ENCODE measurements at regions of chr12 and their contacts with region 1.

Region 1: DNA sequence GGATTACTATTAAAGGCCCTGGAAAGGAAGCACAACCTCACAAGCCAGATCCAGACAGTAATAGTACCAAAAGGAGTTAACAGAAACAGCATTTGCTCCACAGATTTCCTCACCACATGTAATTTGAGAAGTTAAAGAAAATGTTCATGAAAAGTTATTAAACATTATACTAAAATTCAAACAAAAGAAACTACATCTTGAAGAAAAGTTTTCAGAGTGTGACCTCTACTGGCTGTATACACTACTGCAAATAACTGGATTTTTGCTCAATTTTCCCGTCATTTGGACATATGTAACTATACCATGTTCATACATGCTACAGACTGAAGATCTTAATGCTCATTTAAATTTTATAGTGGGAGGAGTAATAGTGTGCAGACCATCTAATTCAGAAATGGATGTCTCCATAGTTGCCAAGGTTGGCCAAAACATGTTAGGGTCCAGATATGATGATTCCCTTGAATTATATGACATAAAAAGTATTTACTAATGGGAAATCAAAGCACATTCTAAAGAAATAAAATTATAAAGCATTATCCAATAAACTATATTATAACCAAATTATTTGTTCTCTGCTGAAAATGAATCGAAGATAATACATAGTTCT is 5.6 kb downstream of the KRR1 start:
- DNase-seq: no peak
- ATAC-seq: no peak

Region 2: GRCh38 chr12:75334384-75335030 is 171.3 kb before region 1 on chr12 and contains the start of gene GLIPR1L1:
- intact Hi-C with region 1: loop called in 1 of 2 experiments (anchors 5 kb)
- DNase-seq: peak; percentile 88
- ATAC-seq: peak; percentile 88 to 91
- total RNA-seq, gene GLIPR1L1: not detected

Region 3: GRCh38 chr12:75345531-75345930 is 160.3 kb before region 1 on chr12:
- intact Hi-C with region 1: no loop called
- DNase-seq: no peak
- ATAC-seq: no peak

Region 4: DNA sequence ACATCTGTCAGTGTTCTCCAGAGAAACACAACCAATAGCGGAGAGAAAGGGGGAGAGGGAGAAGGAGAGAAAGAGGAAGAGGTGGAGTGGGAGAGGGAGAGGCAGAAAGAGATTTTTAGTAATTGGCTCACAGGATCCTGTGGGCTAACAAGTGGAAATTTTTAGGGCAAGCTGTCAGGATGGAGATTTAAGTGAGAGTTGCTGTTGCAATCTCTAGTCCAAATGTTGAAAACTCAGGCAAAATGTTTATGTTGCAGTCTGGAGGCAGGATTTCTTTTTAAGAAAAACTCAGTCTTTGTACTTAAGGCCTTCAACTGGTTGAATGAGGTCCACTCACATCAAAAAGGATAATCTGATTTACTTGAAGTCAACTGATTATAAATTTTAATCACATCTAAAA is 127.5 kb before region 1 on chr12:
- intact Hi-C with region 1: no loop called
- DNase-seq: no peak
- ATAC-seq: no peak